ENCODE measurements at regions of chrX and their contacts with region 1.

Region 1: DNA sequence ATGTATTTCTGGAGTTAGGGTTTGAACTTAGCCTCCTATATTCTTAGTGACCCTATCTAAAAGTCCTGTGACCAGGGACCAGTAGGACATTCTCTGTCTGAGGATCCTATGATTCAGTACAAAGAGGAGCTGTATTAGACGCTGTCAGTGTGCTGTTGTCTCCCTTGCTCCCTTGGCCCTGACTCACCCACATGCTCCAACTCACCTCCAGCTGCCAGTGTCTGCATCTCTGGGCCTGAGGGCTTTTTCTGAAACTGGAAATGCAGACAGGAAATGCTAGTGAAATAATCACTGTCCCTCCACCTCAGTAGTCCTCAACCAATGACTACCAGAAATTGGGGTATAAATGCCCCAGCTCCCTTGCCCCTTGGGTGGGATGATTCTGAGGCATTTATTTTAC is 535.3 kb upstream of the RPS6KA3 start:
- DNase-seq: no peak
- ATAC-seq: no peak
- H3K4me3 ChIP-seq: no peak overlapping the region
- H3K27ac ChIP-seq: no peak overlapping the region
- H3K4me1 ChIP-seq: no peaks in the 10 kb centered on the region
- H3K27me3 ChIP-seq: no peaks in the 10 kb centered on the region
- CTCF ChIP-seq: no peak

Region 2: GRCh38 chrX:20742106-20742505 is 59.9 kb before region 1 on chrX:
- intact Hi-C with region 1: loop called in 1 of 10 experiments (anchors 10 kb)
- DNase-seq: no peak
- ATAC-seq: no peak
- H3K4me3 ChIP-seq: no peak overlapping the region
- H3K27ac ChIP-seq: no peak overlapping the region
- H3K4me1 ChIP-seq: no peaks in the 10 kb centered on the region
- H3K27me3 ChIP-seq: peaks cover 0 to 6% (median 0%) of the 10 kb centered on the region in 7 donors
- CTCF ChIP-seq: no peak

Measured in heart right ventricle (tissue), 16 donors.